ENCODE measurements at regions of chr13 and their contacts with region 1.

Region 1: GRCh38 chr13:60155978-60156377 is 7.8 kb downstream of the DIAPH3 start:
- DNase-seq: peak; percentile 8
- ATAC-seq: peak; percentile 54
- H3K4me3 ChIP-seq: no peak overlapping the region
- H3K27ac ChIP-seq: no peak overlapping the region
- H3K4me1 ChIP-seq: peaks cover 7% of the 10 kb centered on the region; the same call in 1 of the 2 replicates
- H3K27me3 ChIP-seq: no peaks in the 10 kb centered on the region
- CTCF ChIP-seq: no peak
- POLR2A ChIP-seq: no peak
- RAD21 ChIP-seq: no peak

Region 2: GRCh38 chr13:59780058-59780457 is 375.9 kb before region 1 on chr13:
- CTCF ChIA-PET with region 1: no interaction called
- POLR2A ChIA-PET with region 1: no interaction called
- dilution Hi-C with region 1: no loop called
- in situ Hi-C with region 1: no loop called
- intact Hi-C with region 1: loop called (anchors 1 kb)
- DNase-seq: peak; percentile 59
- ATAC-seq: peak; percentile 24; the same call in 1 of the 2 replicates
- H3K4me3 ChIP-seq: no peak overlapping the region
- H3K27ac ChIP-seq: no peak overlapping the region
- H3K4me1 ChIP-seq: peaks cover 5% of the 10 kb centered on the region
- H3K27me3 ChIP-seq: no peaks in the 10 kb centered on the region
- CTCF ChIP-seq: no peak
- POLR2A ChIP-seq: no peak
- RAD21 ChIP-seq: no peak

Region 3: GRCh38 chr13:60080850-60081249 is 75.1 kb before region 1 on chr13:
- CTCF ChIA-PET with region 1: interaction called, 10 read pairs
- POLR2A ChIA-PET with region 1: no interaction called
- dilution Hi-C with region 1: no loop called
- in situ Hi-C with region 1: no loop called
- intact Hi-C with region 1: no loop called
- DNase-seq: no peak
- ATAC-seq: no peak
- H3K4me3 ChIP-seq: no peak overlapping the region
- H3K27ac ChIP-seq: no peak overlapping the region
- H3K4me1 ChIP-seq: no peaks in the 10 kb centered on the region
- H3K27me3 ChIP-seq: no peaks in the 10 kb centered on the region
- CTCF ChIP-seq: no peak
- POLR2A ChIP-seq: no peak
- RAD21 ChIP-seq: no peak